Heart right ventricle (tissue), 16 donors: ENCODE measurements at regions of chr13 and their contacts with region 1.

Region 1: DNA sequence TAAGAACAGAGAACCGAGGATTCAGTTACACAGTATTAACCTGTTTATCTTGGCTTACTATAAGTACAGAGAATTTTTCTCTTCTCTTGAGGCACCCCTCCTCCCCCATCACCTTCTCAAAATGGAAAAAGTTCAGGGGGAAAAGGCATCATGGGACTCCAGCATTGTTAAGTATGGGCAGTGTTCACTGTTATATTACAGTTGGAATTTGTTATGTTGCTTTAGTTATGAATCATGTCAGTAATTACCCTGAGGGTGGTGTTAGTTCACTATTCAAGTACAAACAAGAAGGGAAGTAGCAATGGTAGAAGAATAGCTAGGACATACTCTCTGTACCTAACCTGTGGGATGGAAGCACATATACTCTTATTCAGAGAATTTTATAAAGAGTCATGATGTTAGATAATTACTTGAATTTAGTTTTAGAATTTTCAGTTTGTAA is 12.0 kb downstream of the LPAR6 start:
- DNase-seq: no peak
- ATAC-seq: peak; percentile 77 to 89 (median 86)
- H3K4me3 ChIP-seq: peak overlapping the region in 3 of 10 donors; percentile 2 to 17 (median 13)
- H3K27ac ChIP-seq: peak overlapping the region in 9 of 10 donors; percentile 59 to 93 (median 81)
- H3K4me1 ChIP-seq: peaks cover 0 to 82% (median 42%) of the 10 kb centered on the region in 9 donors
- H3K27me3 ChIP-seq: no peaks in the 10 kb centered on the region
- CTCF ChIP-seq: peak in 4 of 9 donors; percentile 30 to 47 (median 37)

Region 2: GRCh38 chr13:48318821-48319511 is 81.9 kb before region 1 on chr13:
- intact Hi-C with region 1: no loop called
- DNase-seq: peak; percentile 19 to 24
- ATAC-seq: peak in 2 of 8 donors; percentile 13 to 21
- H3K4me3 ChIP-seq: peak overlapping the region in 8 of 10 donors; percentile 10 to 48 (median 36)
- H3K27ac ChIP-seq: peak overlapping the region in 3 of 10 donors; percentile 54 to 64 (median 59)
- H3K4me1 ChIP-seq: peaks cover 0 to 23% (median 12%) of the 10 kb centered on the region in 9 donors
- H3K27me3 ChIP-seq: no peaks in the 10 kb centered on the region
- CTCF ChIP-seq: no peak

Region 3: GRCh38 chr13:48356750-48357149 is 44.1 kb before region 1 on chr13:
- intact Hi-C with region 1: loop called in 1 of 10 experiments (anchors 5 kb)
- DNase-seq: no peak
- ATAC-seq: peak in 5 of 8 donors; percentile 57 to 76 (median 63)
- H3K4me3 ChIP-seq: no peak overlapping the region
- H3K27ac ChIP-seq: peak overlapping the region in 4 of 10 donors; percentile 28 to 64 (median 35)
- H3K4me1 ChIP-seq: peaks cover 0 to 17% (median 0%) of the 10 kb centered on the region in 9 donors
- H3K27me3 ChIP-seq: no peaks in the 10 kb centered on the region
- CTCF ChIP-seq: no peak

Region 4: DNA sequence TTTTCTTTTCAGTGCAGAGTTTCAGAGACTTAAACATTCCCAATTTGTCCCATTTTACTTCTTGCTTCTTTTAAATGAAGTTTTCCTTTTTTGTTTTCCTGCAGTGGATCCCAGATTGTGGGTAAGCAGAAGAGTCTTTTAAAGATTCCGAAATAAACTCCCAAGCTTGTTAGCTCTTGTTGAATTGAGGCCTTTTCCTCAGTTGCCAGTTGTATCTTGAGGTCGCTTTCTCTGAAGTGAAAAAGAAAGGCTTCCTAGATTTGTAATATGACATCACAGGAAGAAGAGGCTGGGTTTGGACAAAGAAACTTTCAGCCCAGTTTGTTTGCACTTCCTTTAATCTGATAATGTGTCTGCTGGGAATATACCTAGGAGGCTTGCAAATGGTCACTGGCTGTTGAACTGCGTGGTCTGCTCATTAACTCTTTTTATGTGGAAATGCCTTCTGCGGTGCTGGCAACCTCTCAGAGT is 12.0 kb after region 1 on chr13 and contains the start of gene LPAR6:
- intact Hi-C with region 1: loop called in 1 of 10 experiments (anchors 1 kb)
- DNase-seq: peak in 1 of 2 donors; percentile 54
- ATAC-seq: peak; percentile 64 to 94 (median 88)
- H3K4me3 ChIP-seq: peak within 1 kb of the TSS; percentile 22 to 69 (median 61)
- H3K27ac ChIP-seq: peak within 1 kb of the TSS; percentile 5 to 93 (median 80)
- H3K4me1 ChIP-seq: peaks cover 0 to 38% (median 24%) of the 10 kb centered on the region in 9 donors
- H3K27me3 ChIP-seq: no peaks in the 10 kb centered on the region
- CTCF ChIP-seq: no peak
- total RNA-seq, gene LPAR6: 5.0 to 28.7 (median 12.1) TPM

Region 5: GRCh38 chr13:48492470-48493065 is 91.7 kb after region 1 on chr13:
- intact Hi-C with region 1: loop called in 2 of 10 experiments (anchors 10 kb)
- DNase-seq: peak; percentile 79 to 88
- ATAC-seq: peak; percentile 90 to 95 (median 93)
- H3K4me3 ChIP-seq: peak overlapping the region in 9 of 10 donors; percentile 12 to 51 (median 38)
- H3K27ac ChIP-seq: peak overlapping the region; percentile 24 to 90 (median 74)
- H3K4me1 ChIP-seq: peaks cover 0 to 80% (median 37%) of the 10 kb centered on the region in 9 donors
- H3K27me3 ChIP-seq: no peaks in the 10 kb centered on the region
- CTCF ChIP-seq: no peak

Region 6: GRCh38 chr13:48505597-48506091 is 104.8 kb after region 1 on chr13:
- intact Hi-C with region 1: loop called in 1 of 10 experiments (anchors 10 kb)
- DNase-seq: peak in 1 of 2 donors; percentile 68
- ATAC-seq: peak; percentile 57 to 89 (median 84)
- H3K4me3 ChIP-seq: peak overlapping the region in 5 of 10 donors; percentile 6 to 29 (median 20)
- H3K27ac ChIP-seq: peak overlapping the region; percentile 47 to 92 (median 75)
- H3K4me1 ChIP-seq: peaks cover 0 to 77% (median 34%) of the 10 kb centered on the region in 9 donors
- H3K27me3 ChIP-seq: no peaks in the 10 kb centered on the region
- CTCF ChIP-seq: no peak

Region 7: GRCh38 chr13:48532506-48533499 is 131.9 kb after region 1 on chr13 and contains the start of gene RCBTB2:
- intact Hi-C with region 1: loop called in 1 of 10 experiments (anchors 2 kb)
- DNase-seq: peak; percentile 98 to 100
- ATAC-seq: peak; percentile 96 to 99 (median 98)
- H3K4me3 ChIP-seq: peak within 1 kb of the TSS; percentile 59 to 76 (median 74)
- H3K27ac ChIP-seq: peak within 1 kb of the TSS; percentile 97 to 99 (median 98)
- H3K4me1 ChIP-seq: peaks cover 3 to 58% (median 34%) of the 10 kb centered on the region in 9 donors
- H3K27me3 ChIP-seq: no peaks in the 10 kb centered on the region
- CTCF ChIP-seq: peak in 2 of 9 donors; percentile 9 to 16
- total RNA-seq, gene RCBTB2: 8.3 to 16.2 (median 12.2) TPM

Region 8: GRCh38 chr13:48571126-48571913 is 170.4 kb after region 1 on chr13:
- intact Hi-C with region 1: loop called in 5 of 10 experiments (anchors 5 to 10 kb)
- DNase-seq: peak in 1 of 2 donors; percentile 59
- ATAC-seq: peak; percentile 40 to 82 (median 70)
- H3K4me3 ChIP-seq: peak overlapping the region in 7 of 10 donors; percentile 23 to 46 (median 30)
- H3K27ac ChIP-seq: peak overlapping the region; percentile 60 to 92 (median 83)
- H3K4me1 ChIP-seq: peaks cover 0 to 88% (median 72%) of the 10 kb centered on the region in 9 donors
- H3K27me3 ChIP-seq: no peaks in the 10 kb centered on the region
- CTCF ChIP-seq: no peak